ENCODE measurements at regions of chr13 and their contacts with region 1.

Region 1: GRCh38 chr13:49759503-49759902 is 33.0 kb downstream of the KPNA3 start:
- DNase-seq: peak in 4 of 9 donors; percentile 5 to 20 (median 11)
- ATAC-seq: no peak
- H3K4me3 ChIP-seq: no peak overlapping the region
- H3K4me3 Mint-ChIP-seq: peak overlapping the region in 7 of 10 donors; percentile 29 to 55 (median 43)
- H3K27ac ChIP-seq: no peak overlapping the region
- H3K27ac Mint-ChIP-seq: peak overlapping the region in 6 of 9 donors; percentile 15 to 73 (median 56)
- H3K4me1 ChIP-seq: peaks cover 0 to 17% of the 10 kb centered on the region in 2 donors
- H3K4me1 Mint-ChIP-seq: peaks cover 23 to 70% (median 54%) of the 10 kb centered on the region in 7 donors
- H3K27me3 ChIP-seq: no peaks in the 10 kb centered on the region
- H3K27me3 Mint-ChIP-seq: no peaks in the 10 kb centered on the region

Region 2: GRCh38 chr13:49776871-49777270 is 17.4 kb after region 1 on chr13:
- CTCF ChIA-PET with region 1: no interaction called
- POLR2A ChIA-PET with region 1: no interaction called
- intact Hi-C with region 1: loop called in 1 of 2 experiments (anchors 2 kb)
- DNase-seq: no peak
- ATAC-seq: no peak
- H3K4me3 ChIP-seq: no peak overlapping the region
- H3K4me3 Mint-ChIP-seq: no peak overlapping the region
- H3K27ac ChIP-seq: no peak overlapping the region
- H3K27ac Mint-ChIP-seq: no peak overlapping the region
- H3K4me1 ChIP-seq: peaks cover 0 to 6% of the 10 kb centered on the region in 2 donors
- H3K4me1 Mint-ChIP-seq: peaks cover 19 to 81% (median 65%) of the 10 kb centered on the region in 7 donors
- H3K27me3 ChIP-seq: no peaks in the 10 kb centered on the region
- H3K27me3 Mint-ChIP-seq: no peaks in the 10 kb centered on the region

Region 3: DNA sequence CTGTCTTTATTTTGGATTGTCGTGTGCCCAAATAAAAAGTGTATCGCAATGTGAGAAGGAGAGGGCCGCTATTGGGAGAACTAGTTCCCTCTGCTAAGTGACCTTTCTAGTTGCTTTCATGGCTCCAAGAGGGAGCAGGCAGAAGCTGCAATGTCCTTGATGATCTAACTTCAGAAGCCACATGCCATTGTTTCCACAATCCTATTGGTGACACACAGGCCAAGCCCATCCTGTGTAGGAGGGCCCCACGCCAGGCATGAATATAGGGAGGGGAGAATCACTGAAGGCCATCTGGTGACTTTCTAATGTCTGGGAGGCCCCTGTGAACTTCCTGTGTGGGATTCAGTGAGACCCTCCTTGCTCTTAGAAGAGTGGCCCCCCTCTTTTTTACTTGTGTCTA is 80.8 kb after region 1 on chr13:
- CTCF ChIA-PET with region 1: no interaction called
- POLR2A ChIA-PET with region 1: no interaction called
- intact Hi-C with region 1: loop called in 1 of 2 experiments (anchors 5 kb)
- DNase-seq: no peak
- ATAC-seq: no peak
- H3K4me3 ChIP-seq: no peak overlapping the region
- H3K4me3 Mint-ChIP-seq: no peak overlapping the region
- H3K27ac ChIP-seq: no peak overlapping the region
- H3K27ac Mint-ChIP-seq: no peak overlapping the region
- H3K4me1 ChIP-seq: no peaks in the 10 kb centered on the region
- H3K4me1 Mint-ChIP-seq: no peaks in the 10 kb centered on the region
- H3K27me3 ChIP-seq: no peaks in the 10 kb centered on the region
- H3K27me3 Mint-ChIP-seq: no peaks in the 10 kb centered on the region

Measured in naive thymus-derived CD4-positive, alpha-beta T cell (primary cell).